CD8-positive, alpha-beta T cell (primary cell): ENCODE measurements at regions of chr3 and their contacts with region 1.

Region 1: DNA sequence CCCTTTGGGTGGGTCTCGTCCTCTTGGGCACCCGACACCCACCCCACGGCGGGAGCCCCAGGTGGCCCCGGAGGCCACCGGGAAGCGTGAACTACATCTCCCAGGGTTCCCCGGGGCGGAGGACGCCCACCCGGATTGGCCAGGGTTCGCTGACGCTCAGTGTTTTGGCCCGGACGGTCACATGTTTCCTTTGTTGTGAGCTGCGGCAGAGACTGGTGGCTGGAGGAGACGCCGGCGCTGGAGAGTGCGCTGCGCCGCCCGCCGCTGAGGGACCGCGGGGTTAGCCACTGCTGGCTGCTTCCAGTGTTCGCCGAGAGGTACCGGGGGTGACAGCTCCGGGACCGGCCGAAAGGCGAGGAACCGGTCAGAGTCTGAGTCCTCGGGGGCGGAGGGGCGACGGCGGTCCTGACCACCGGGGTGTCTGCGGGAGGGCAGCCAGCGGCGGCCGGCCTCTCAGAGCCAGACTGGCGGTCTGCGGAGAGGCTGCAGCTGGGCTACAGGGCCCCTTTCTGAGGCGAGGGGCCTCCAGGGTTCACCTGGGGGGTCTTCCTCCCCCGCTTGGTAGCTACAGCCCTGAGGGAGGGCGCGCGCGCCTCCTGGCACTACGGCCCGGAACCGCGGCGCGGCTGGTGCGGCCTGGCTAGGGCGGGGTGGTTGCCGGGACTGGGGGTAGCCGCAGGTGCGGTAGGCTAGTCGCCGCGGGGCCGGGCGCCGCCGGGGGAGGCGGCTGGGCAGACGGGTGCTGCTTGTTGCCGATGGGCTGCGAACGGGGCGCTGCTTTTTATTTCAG is at the start of gene KLHL24:
- DNase-seq: peak; percentile 82 to 95 (median 90)
- ATAC-seq: peak; percentile 73
- H3K4me3 ChIP-seq: peak within 1 kb of the TSS; percentile 88 to 97
- H3K4me3 Mint-ChIP-seq: peak within 1 kb of the TSS; percentile 94
- H3K27ac ChIP-seq: peak within 1 kb of the TSS; percentile 94 to 99
- H3K27ac Mint-ChIP-seq: peak within 1 kb of the TSS; percentile 97
- H3K4me1 ChIP-seq: peaks cover 25% of the 10 kb centered on the region
- H3K4me1 Mint-ChIP-seq: peaks cover 34% of the 10 kb centered on the region
- H3K27me3 ChIP-seq: no peaks in the 10 kb centered on the region
- H3K27me3 Mint-ChIP-seq: no peaks in the 10 kb centered on the region
- CTCF ChIP-seq: no peak
- total RNA-seq, gene KLHL24: 180 to 181 TPM

Region 2: DNA sequence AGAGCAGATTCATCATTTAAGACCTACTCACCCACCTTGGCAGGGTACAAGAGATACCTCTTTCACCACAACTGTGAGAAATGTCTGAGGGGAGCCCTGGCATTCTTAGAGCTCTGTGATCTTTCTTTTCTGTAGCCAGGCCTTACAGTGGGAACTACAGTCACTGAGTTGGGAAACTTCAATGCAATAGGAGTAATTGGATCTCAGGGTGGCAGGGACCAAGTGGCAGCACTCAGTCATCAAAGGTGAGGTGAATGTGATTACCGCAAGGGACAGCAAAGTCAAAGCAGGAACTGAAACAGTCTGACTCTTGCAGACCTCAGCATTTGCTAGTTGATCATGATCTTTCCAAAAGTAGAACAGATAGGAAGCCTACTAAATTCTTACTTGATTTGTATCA is 200.0 kb before region 1 on chr3:
- CTCF ChIA-PET with region 1: no interaction called
- POLR2A ChIA-PET with region 1: no interaction called
- intact Hi-C with region 1: no loop called
- DNase-seq: no peak
- ATAC-seq: no peak
- H3K4me3 ChIP-seq: no peak overlapping the region
- H3K4me3 Mint-ChIP-seq: no peak overlapping the region
- H3K27ac ChIP-seq: no peak overlapping the region
- H3K27ac Mint-ChIP-seq: no peak overlapping the region
- H3K4me1 ChIP-seq: no peaks in the 10 kb centered on the region
- H3K4me1 Mint-ChIP-seq: no peaks in the 10 kb centered on the region
- H3K27me3 ChIP-seq: no peaks in the 10 kb centered on the region
- H3K27me3 Mint-ChIP-seq: peaks cover 8% of the 10 kb centered on the region
- CTCF ChIP-seq: no peak

Region 3: DNA sequence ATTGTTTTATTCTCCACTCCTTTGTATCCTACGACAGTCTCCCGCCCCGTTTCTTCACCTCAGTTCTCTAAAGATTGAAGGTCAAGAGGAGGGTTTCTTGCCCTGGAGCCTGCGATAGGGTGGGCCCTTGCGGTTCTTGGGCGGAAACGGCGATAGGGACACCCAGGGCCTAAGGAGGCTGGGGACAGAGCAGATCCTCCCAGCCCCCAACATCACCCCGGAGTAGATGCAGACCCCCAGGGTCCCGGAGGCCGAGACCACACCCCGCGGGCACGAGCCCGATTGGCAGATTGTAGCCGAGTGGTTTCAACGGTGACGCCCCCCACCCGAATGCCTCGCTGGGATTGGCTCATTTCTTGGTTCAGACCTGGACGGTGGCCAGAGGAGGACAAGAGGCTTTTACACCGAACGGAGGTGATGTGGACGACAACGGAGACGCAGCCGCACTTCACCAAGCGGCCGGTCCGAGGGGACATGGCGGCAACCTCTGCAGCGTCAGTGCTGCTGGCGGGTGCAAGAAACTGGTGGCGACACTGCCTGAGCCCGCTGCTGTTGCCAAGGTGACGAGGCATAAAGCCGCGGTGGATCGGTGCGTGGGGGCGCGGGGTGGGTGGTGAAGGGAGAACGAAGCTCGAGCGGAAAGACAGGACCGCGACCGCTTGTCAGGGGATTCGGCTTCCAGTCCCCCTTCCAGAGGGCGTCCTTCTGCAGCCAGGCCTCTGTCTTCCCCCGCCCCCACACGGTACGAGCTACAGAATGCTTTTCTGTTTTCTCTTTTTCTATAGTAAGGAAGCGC is 188.2 kb before region 1 on chr3:
- CTCF ChIA-PET with region 1: no interaction called
- POLR2A ChIA-PET with region 1: interaction called, 4 read pairs
- intact Hi-C with region 1: loop called in 1 of 2 experiments (anchors 5 kb)
- DNase-seq: peak; percentile 37 to 77 (median 62)
- ATAC-seq: peak; percentile 81
- H3K4me3 ChIP-seq: peak overlapping the region; percentile 66 to 95
- H3K4me3 Mint-ChIP-seq: peak overlapping the region; percentile 97
- H3K27ac ChIP-seq: peak overlapping the region; percentile 38 to 49
- H3K27ac Mint-ChIP-seq: peak overlapping the region; percentile 80
- H3K4me1 ChIP-seq: peaks cover 12% of the 10 kb centered on the region
- H3K4me1 Mint-ChIP-seq: peaks cover 22% of the 10 kb centered on the region
- H3K27me3 ChIP-seq: no peaks in the 10 kb centered on the region
- H3K27me3 Mint-ChIP-seq: no peaks in the 10 kb centered on the region
- CTCF ChIP-seq: no peak

Region 4: DNA sequence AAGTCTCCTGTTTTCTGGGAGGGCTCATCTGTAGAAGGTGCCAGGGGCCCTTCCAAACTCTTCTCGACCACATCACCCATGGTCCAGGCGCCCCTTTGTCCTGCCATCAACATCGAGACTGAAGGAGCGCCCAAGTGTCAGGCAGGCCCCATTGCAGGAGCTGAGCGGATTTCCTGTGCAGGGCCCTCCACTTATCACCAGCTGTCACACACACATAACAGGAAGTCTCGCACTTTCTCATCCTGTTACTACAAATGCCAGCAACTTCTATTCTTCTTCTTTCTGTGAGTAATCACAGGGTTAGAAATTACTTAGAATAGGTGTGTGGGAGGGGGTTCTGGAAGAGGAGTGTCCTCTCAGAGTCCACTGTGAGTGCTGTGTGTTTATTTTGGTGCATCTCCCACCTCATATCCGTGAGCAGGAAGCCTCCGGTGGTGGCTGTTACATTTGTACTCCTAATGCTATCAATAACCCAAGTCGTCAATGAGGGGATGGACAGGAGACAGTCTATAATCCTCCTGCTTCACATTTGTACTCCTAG is 80.0 kb before region 1 on chr3 and contains the start of gene KLHL6:
- CTCF ChIA-PET with region 1: interaction called, 6 read pairs
- POLR2A ChIA-PET with region 1: interaction called, 13 read pairs
- intact Hi-C with region 1: loop called (anchors 1 to 2 kb)
- DNase-seq: peak; percentile 44 to 88 (median 76)
- ATAC-seq: peak; percentile 84
- H3K4me3 ChIP-seq: peak within 1 kb of the TSS; percentile 68 to 71
- H3K4me3 Mint-ChIP-seq: peak within 1 kb of the TSS; percentile 93
- H3K27ac ChIP-seq: peak within 1 kb of the TSS; percentile 73 to 91
- H3K27ac Mint-ChIP-seq: peak within 1 kb of the TSS; percentile 98
- H3K4me1 ChIP-seq: peaks cover 32% of the 10 kb centered on the region
- H3K4me1 Mint-ChIP-seq: peaks cover 53% of the 10 kb centered on the region
- H3K27me3 ChIP-seq: no peaks in the 10 kb centered on the region
- H3K27me3 Mint-ChIP-seq: no peaks in the 10 kb centered on the region
- CTCF ChIP-seq: peak; percentile 22
- total RNA-seq, gene KLHL6: 27.7 to 29.7 TPM

Region 5: GRCh38 chr3:183597959-183598358 is 37.7 kb before region 1 on chr3:
- CTCF ChIA-PET with region 1: no interaction called
- POLR2A ChIA-PET with region 1: no interaction called
- intact Hi-C with region 1: no loop called
- DNase-seq: no peak
- ATAC-seq: no peak
- H3K4me3 ChIP-seq: no peak overlapping the region
- H3K4me3 Mint-ChIP-seq: no peak overlapping the region
- H3K27ac ChIP-seq: no peak overlapping the region
- H3K27ac Mint-ChIP-seq: no peak overlapping the region
- H3K4me1 ChIP-seq: no peaks in the 10 kb centered on the region
- H3K4me1 Mint-ChIP-seq: no peaks in the 10 kb centered on the region
- H3K27me3 ChIP-seq: no peaks in the 10 kb centered on the region
- H3K27me3 Mint-ChIP-seq: no peaks in the 10 kb centered on the region
- CTCF ChIP-seq: no peak

Region 6: DNA sequence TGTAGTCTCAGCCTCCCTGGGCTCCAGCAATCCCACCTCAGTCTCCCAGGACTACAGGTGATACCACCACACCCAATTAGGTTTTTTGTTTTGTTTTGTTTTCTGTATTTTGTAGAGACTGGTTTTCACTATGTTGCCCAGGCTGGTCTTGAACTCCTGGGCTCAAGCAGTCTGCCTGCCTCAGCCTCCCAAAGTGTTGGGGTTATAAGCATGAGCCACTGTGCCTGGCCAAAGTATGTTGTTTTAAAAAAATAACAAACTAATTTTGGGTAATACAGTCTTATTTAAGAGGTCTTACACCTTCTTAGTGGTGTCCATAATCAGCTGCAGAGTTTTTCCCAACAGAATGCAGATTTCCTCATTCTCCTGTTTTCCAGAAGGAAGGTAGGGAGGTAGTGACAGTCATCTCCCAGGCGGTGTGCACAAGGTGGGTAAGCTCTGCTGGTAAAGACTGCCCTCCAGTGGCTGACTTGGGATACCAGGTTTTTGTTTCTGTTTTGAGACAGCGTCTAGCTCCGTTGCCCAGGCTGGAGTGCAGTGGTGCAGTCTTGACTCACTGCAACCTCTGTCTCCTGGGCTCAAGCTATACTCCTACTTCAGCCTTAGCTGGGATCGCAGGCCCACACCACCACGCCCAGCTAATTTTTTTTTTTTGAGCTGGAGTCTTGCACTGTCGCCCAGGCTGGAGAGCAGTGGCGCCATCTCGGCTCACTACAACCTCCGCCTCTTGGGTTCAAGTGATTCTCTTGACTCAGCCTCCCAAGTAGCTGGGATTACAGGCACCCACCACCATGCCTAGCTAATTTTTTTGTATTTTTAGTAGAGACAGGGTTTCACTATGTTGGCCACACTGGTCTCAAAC is 131.3 kb after region 1 on chr3:
- CTCF ChIA-PET with region 1: interaction called, 3 read pairs
- POLR2A ChIA-PET with region 1: no interaction called
- intact Hi-C with region 1: loop called in 1 of 2 experiments (anchors 5 kb)
- DNase-seq: peak; percentile 42 to 82 (median 72)
- ATAC-seq: peak; percentile 91
- H3K4me3 ChIP-seq: no peak overlapping the region
- H3K4me3 Mint-ChIP-seq: no peak overlapping the region
- H3K27ac ChIP-seq: no peak overlapping the region
- H3K27ac Mint-ChIP-seq: no peak overlapping the region
- H3K4me1 ChIP-seq: no peaks in the 10 kb centered on the region
- H3K4me1 Mint-ChIP-seq: peaks cover 4% of the 10 kb centered on the region
- H3K27me3 ChIP-seq: no peaks in the 10 kb centered on the region
- H3K27me3 Mint-ChIP-seq: no peaks in the 10 kb centered on the region
- CTCF ChIP-seq: peak; percentile 77

Region 7: DNA sequence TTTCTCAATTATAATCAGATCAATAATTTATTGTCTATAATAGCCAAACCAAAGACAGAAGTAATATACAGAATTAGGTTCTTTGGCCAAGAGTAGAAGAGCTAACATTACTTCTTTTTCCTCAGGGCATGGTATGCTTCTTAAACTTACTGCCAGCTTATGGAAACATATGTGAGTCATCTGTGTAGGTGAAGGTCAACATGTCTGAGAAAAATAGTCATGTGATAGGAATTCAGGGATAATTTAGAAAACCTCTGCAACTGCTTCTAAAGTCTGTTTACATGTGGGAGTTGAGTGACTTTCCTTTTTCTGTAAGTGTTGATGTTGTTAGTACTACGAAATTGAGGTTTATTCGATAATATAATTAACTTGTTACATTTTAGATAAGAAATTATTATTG is 209.0 kb after region 1 on chr3:
- CTCF ChIA-PET with region 1: no interaction called
- POLR2A ChIA-PET with region 1: no interaction called
- intact Hi-C with region 1: no loop called
- DNase-seq: no peak
- ATAC-seq: no peak
- H3K4me3 ChIP-seq: no peak overlapping the region
- H3K4me3 Mint-ChIP-seq: no peak overlapping the region
- H3K27ac ChIP-seq: no peak overlapping the region
- H3K27ac Mint-ChIP-seq: no peak overlapping the region
- H3K4me1 ChIP-seq: no peaks in the 10 kb centered on the region
- H3K4me1 Mint-ChIP-seq: no peaks in the 10 kb centered on the region
- H3K27me3 ChIP-seq: no peaks in the 10 kb centered on the region
- H3K27me3 Mint-ChIP-seq: no peaks in the 10 kb centered on the region
- CTCF ChIP-seq: no peak

Region 8: GRCh38 chr3:184314363-184314699 is 678.7 kb after region 1 on chr3 and contains the start of gene EIF4G1:
- CTCF ChIA-PET with region 1: no interaction called
- POLR2A ChIA-PET with region 1: no interaction called
- intact Hi-C with region 1: loop called in 1 of 2 experiments (anchors 5 kb)
- DNase-seq: peak; percentile 83 to 98 (median 92)
- ATAC-seq: peak; percentile 78
- H3K4me3 ChIP-seq: peak within 1 kb of the TSS; percentile 60 to 64
- H3K4me3 Mint-ChIP-seq: peak within 1 kb of the TSS; percentile 87
- H3K27ac ChIP-seq: peak within 1 kb of the TSS; percentile 80 to 93
- H3K27ac Mint-ChIP-seq: peak within 1 kb of the TSS; percentile 94
- H3K4me1 ChIP-seq: peaks cover 23% of the 10 kb centered on the region
- H3K4me1 Mint-ChIP-seq: peaks cover 33% of the 10 kb centered on the region
- H3K27me3 ChIP-seq: no peaks in the 10 kb centered on the region
- H3K27me3 Mint-ChIP-seq: no peaks in the 10 kb centered on the region
- CTCF ChIP-seq: no peak
- total RNA-seq, gene EIF4G1: 220 to 235 TPM